ENCODE measurements at regions of chr1 and their contacts with region 1.

Region 1: DNA sequence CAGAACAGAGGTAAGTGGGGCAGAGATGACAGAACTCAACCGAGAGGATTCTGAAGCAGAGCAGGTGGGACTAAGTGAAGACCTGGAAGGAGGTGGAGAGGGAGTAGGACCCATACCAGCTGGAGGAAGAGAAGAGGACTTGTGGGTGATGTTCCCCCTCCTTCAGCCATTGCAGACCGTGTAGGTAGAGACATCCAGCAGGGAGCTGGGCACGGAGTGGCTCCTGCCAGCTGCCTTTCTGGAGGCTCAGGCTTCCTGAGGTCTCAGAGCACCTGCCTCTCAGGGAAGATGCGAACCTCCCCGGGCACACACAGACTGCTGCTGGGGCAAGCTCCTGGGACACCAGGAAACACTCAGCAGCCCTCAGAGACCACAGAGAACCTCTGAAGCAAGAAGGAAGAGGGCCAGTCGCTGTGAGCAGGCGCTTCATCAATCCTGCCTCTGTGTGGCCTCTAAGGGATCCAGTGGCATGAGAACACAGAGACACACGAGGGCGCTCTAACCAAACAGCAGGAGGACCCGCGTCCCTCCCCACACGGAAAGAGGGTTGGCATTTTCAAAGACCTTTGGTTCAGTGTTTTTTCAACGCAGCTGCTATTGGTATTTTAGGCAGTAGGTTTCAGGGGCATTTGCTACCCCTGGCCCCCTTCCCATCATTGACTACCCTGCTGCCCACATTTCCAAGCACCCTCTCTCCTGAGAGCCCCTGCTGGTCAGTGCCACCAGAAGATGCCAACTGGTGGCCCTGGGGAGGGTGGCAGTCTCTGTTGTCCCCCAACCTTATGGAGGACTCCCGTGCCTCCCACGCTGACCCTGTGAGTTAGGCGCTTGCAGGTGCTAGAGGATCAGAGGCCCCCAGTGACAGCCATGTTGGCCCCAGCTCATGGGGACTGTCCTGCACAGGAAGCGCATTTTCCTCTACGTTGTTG is 89.6 kb upstream of the EDN2 start:
- DNase-seq: peak; percentile 85
- ATAC-seq: peak; percentile 94
- H3K4me3 ChIP-seq: no peak overlapping the region
- H3K27ac ChIP-seq: no peak overlapping the region
- H3K4me1 ChIP-seq: peaks cover 4% of the 10 kb centered on the region; the same call in 1 of the 2 replicates
- H3K27me3 ChIP-seq: no peaks in the 10 kb centered on the region
- CTCF ChIP-seq: peak; percentile 93

Region 2: DNA sequence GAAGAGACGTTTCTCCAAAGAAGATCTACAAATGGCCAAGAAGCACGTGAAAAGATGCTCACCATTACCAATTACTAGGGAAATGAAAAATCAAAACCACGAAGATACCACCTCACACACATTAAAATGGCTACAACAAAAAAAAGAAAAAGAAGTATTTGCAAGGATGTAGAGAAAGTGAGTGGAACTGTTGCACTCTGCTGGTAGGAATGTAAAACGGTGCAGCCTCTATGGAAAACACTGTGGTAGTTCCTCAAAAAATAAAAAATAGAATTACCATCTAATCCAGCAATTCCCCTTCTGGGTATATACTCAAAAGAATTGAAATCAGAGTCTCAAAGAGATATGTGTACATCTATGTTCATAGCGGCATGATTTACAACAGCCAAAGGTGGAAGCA is 25.9 kb after region 1 on chr1:
- CTCF ChIA-PET with region 1: no interaction called
- POLR2A ChIA-PET with region 1: no interaction called
- intact Hi-C with region 1: loop called (anchors 1 kb)
- DNase-seq: peak; percentile 46
- ATAC-seq: peak; percentile 51
- H3K4me3 ChIP-seq: no peak overlapping the region
- H3K27ac ChIP-seq: no peak overlapping the region
- H3K4me1 ChIP-seq: no peaks in the 10 kb centered on the region
- H3K27me3 ChIP-seq: no peaks in the 10 kb centered on the region
- CTCF ChIP-seq: peak; percentile 76

Region 3: DNA sequence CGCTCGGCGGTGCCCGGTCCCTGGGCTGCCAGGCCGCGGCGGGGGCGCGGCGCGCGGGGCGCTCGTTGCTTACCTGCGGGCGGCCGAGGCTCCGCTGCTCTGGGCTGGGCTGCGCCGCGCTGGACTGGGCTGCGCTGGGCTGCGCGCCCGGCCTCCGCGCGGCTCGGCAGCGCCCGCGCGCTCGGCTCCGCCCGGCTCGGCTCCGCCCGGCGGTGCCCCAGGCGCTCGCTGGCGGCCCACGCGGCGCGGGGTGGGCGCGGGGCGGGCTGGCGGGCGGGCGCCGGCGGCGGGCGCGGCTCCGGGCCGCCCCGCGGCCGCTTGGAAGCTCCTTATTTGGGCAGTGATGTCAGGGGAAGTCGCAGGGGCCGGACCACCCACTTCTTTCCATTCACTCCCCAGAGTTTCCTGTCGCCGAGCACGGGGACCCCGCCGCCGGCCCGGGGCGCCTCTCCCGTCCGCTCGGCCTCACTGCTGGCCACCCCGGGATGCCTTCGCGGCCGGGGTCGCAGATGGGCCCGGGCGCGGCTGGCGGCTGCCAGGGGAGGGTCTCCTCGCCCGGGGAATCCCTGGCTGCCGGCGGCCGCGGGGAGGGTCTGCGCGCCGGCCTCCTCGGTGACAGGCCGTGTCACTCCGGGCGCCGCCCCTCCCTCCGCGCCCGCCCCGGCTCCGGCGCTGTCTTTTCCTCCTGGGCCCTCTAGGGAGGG is 88.2 kb after region 1 on chr1:
- CTCF ChIA-PET with region 1: no interaction called
- POLR2A ChIA-PET with region 1: no interaction called
- intact Hi-C with region 1: loop called (anchors 10 kb)
- DNase-seq: peak; percentile 60
- ATAC-seq: peak; percentile 78
- H3K4me3 ChIP-seq: peak overlapping the region; percentile 86
- H3K27ac ChIP-seq: no peak overlapping the region
- H3K4me1 ChIP-seq: peaks cover 36% of the 10 kb centered on the region
- H3K27me3 ChIP-seq: no peaks in the 10 kb centered on the region
- CTCF ChIP-seq: no peak

Region 4: GRCh38 chr1:41783189-41783639 is 209.2 kb after region 1 on chr1:
- CTCF ChIA-PET with region 1: no interaction called
- POLR2A ChIA-PET with region 1: no interaction called
- intact Hi-C with region 1: loop called (anchors 5 kb)
- DNase-seq: peak; percentile 97
- ATAC-seq: peak; percentile 96
- H3K4me3 ChIP-seq: peak overlapping the region; percentile 46
- H3K27ac ChIP-seq: peak overlapping the region; percentile 65
- H3K4me1 ChIP-seq: peaks cover 27% of the 10 kb centered on the region
- H3K27me3 ChIP-seq: no peaks in the 10 kb centered on the region
- CTCF ChIP-seq: no peak

Region 5: GRCh38 chr1:41795205-41795762 is 221.2 kb after region 1 on chr1:
- CTCF ChIA-PET with region 1: interaction called, 3 read pairs
- POLR2A ChIA-PET with region 1: interaction called, 4 read pairs
- intact Hi-C with region 1: loop called (anchors 1 kb)
- DNase-seq: peak; percentile 74
- ATAC-seq: peak; percentile 83
- H3K4me3 ChIP-seq: no peak overlapping the region
- H3K27ac ChIP-seq: no peak overlapping the region
- H3K4me1 ChIP-seq: 0 out of 2 replicates have a peak, but pooled peaks cover 8% of the 10 kb centered on the region
- H3K27me3 ChIP-seq: no peaks in the 10 kb centered on the region
- CTCF ChIP-seq: peak; percentile 72

Region 6: GRCh38 chr1:42173155-42173933 is 599.3 kb after region 1 on chr1:
- CTCF ChIA-PET with region 1: no interaction called
- POLR2A ChIA-PET with region 1: no interaction called
- intact Hi-C with region 1: loop called (anchors 10 kb)
- DNase-seq: peak; percentile 56
- ATAC-seq: peak; percentile 31
- H3K4me3 ChIP-seq: no peak overlapping the region
- H3K27ac ChIP-seq: peak overlapping the region; percentile 88
- H3K4me1 ChIP-seq: peaks cover 64% of the 10 kb centered on the region
- H3K27me3 ChIP-seq: no peaks in the 10 kb centered on the region
- CTCF ChIP-seq: peak; percentile 98

Measured in PC-3 (cell line).